Aorta (tissue), 5 donors: ENCODE measurements at regions of chr12 and their contacts with region 1.

Region 1: GRCh38 chr12:26274441-26275312 is 79.3 kb downstream of the SSPN start:
- DNase-seq: peak; percentile 89 to 92
- ATAC-seq: peak; percentile 96
- H3K4me3 ChIP-seq: no peak overlapping the region
- H3K27ac ChIP-seq: peak overlapping the region; percentile 59 to 84
- H3K4me1 ChIP-seq: no peaks in the 10 kb centered on the region
- H3K27me3 ChIP-seq: no peaks in the 10 kb centered on the region

Region 2: GRCh38 chr12:25985296-25986175 is 289.1 kb before region 1 on chr12:
- intact Hi-C with region 1: no loop called
- DNase-seq: no peak
- ATAC-seq: no peak
- H3K4me3 ChIP-seq: no peak overlapping the region
- H3K27ac ChIP-seq: no peak overlapping the region
- H3K4me1 ChIP-seq: peaks cover 2 to 19% of the 10 kb centered on the region in 2 donors
- H3K27me3 ChIP-seq: no peaks in the 10 kb centered on the region

Region 3: GRCh38 chr12:26153421-26154154 is 121.1 kb before region 1 on chr12:
- intact Hi-C with region 1: loop called in 1 of 2 experiments (anchors 5 kb)
- DNase-seq: no peak
- ATAC-seq: peak; percentile 75
- H3K4me3 ChIP-seq: no peak overlapping the region
- H3K27ac ChIP-seq: peak overlapping the region; percentile 76 to 88
- H3K4me1 ChIP-seq: peaks cover 5 to 7% of the 10 kb centered on the region in 2 donors
- H3K27me3 ChIP-seq: no peaks in the 10 kb centered on the region

Region 4: GRCh38 chr12:26172539-26172938 is 102.1 kb before region 1 on chr12:
- intact Hi-C with region 1: no loop called
- DNase-seq: no peak
- ATAC-seq: no peak
- H3K4me3 ChIP-seq: no peak overlapping the region
- H3K27ac ChIP-seq: no peak overlapping the region
- H3K4me1 ChIP-seq: no peaks in the 10 kb centered on the region
- H3K27me3 ChIP-seq: no peaks in the 10 kb centered on the region